ENCODE measurements at regions of chr1 and their contacts with region 1.

Region 1: DNA sequence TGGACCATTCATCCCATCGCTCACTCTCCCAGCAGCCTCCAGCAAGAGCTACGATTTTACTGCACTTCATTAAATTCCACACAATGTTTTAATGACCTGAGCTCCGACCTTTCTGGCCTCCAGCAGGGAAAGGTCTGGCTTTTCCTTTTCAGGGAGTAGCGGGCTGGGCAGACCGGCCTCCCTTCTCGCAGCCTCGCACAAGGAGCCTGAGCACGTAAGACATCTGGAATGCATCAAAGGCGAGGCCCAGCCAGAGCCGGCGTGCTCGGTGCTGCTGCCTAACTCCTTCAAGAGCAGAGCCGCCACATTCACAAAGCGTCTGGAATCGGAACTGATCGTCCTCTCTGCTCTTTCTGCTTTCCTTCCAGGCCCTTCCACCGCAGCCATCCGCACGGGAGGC is 32.5 kb upstream of the FHAD1 start:
- DNase-seq: no peak
- H3K4me3 ChIP-seq: no peak overlapping the region
- CTCF ChIP-seq: no peak

Region 2: DNA sequence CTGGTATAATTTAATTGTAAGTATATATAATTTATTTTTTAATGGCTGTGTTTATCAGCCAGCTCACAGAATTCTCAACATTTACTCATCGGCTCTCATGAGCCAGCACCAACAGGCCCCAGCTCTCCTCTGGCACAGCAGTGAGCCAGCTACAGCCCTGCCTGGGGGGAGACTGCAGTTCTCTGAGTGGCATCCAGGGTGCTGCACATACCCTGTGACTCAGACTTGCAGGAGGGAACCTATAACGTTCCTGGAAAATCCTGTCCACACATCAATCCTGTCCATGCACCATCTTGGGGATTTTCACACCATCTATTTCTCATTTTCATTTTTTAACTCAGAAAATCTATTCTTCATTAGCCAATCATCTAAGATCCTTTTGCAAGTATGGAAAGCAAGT is 69.0 kb after region 1 on chr1:
- in situ Hi-C with region 1: loop called (anchors 5 kb)
- DNase-seq: no peak
- H3K4me3 ChIP-seq: no peak overlapping the region
- CTCF ChIP-seq: peak; percentile 32